Activated T-helper 2 cell treated with anti-CD3 and anti-CD28 coated beads, Interferon-gamma antibody, Interleukin-2, Interleukin-4, amounts not matched to agents 10 μg/mL and 5 μg/mL and 100 μg/mL, durations not matched to agents 14 hours and 24 hours and 36 hours (primary cell): ENCODE measurements at regions of chr16 and their contacts with region 1.

Region 1: DNA sequence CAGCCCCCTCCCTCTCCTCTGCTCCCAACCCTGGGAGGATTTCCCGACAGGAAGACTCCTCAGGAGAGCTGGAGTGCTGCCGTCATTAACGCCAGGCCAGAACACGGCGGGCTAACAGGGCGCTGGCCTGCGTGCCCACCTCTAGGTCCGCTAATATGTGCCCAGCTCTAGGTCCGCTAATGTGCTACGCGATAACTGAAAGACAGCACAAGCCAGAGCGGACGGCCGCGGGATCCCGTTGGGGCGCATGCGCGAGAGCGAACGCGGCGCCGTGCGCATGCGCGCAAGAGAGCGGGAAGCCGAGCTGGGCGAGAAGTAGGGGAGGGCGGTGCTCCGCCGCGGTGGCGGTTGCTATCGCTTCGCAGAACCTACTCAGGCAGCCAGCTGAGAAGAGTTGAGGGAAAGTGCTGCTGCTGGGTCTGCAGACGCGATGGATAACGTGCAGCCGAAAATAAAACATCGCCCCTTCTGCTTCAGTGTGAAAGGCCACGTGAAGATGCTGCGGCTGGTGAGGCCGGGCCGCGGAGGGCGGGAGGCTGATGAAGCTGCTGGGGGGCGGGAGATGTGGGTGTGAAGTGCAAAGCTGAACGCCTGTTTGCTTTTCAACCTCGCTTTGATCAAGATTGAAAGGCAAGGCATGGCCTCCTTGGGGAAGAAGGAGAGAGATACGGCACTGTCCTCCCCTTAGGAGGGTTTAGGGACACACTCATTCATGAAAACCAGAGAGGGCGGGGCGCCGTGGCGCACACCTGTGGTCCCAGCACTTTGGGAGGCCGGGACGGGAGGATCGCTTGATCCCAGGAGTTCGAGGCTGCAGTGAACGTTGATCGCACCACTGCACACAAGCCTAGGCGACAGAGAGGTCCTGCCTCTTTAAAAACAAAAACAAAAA is at the start of gene CKLF:
- DNase-seq: peak; percentile 94
- H3K4me3 Mint-ChIP-seq: peak within 1 kb of the TSS; percentile 98
- H3K27ac Mint-ChIP-seq: peak within 1 kb of the TSS; percentile 93
- H3K4me1 Mint-ChIP-seq: peaks cover 64% of the 10 kb centered on the region
- H3K27me3 Mint-ChIP-seq: no peaks in the 10 kb centered on the region
- total RNA-seq, gene CKLF: 102 and 110 TPM in 2 replicates

Region 2: DNA sequence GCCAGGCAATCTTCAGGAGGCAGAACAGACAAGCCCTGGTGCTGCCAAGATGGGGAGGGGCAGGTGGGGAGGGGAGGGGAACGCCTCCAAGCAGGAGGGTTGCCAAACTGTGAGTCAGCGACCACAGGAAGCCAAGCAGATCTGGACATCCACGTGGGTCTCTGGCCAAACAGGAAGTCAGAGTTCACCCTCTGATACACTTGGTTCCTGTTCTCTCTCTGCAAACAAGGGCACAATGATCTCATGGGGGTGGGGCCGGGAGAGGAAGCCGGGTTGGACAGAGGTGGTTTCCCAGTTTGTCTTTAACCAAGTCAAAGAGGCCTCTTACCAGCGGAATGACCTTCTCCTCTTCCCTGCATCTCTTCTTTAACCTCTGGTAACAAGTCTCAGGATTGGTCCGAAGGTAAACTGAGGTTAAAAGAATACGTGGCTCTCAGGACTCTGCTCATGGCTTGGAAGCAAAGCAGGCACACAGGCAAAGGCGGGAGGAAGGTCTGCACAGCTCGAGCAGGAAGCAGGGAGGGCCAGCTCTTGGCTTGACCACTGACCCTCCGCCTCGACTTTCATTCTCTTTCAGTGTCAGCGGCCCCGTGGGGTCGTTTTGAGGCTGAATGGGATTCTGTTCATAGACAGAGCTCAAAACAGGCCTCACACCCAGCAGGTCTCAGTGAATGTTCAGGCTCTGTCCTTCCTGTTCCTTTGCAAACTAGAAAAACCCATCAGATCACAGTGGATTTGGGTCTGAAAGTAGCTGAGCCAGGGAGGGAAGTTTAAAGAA is 35.5 kb before region 1 on chr16:
- intact Hi-C with region 1: loop called (anchors 1 kb)
- DNase-seq: peak; percentile 75
- H3K4me3 Mint-ChIP-seq: peak overlapping the region; percentile 82
- H3K27ac Mint-ChIP-seq: peak overlapping the region; percentile 99
- H3K4me1 Mint-ChIP-seq: peaks cover 59% of the 10 kb centered on the region
- H3K27me3 Mint-ChIP-seq: no peaks in the 10 kb centered on the region

Region 3: GRCh38 chr16:66521951-66522771 is 30.4 kb before region 1 on chr16:
- intact Hi-C with region 1: loop called (anchors 1 kb)
- DNase-seq: peak; percentile 83
- H3K4me3 Mint-ChIP-seq: peak overlapping the region; percentile 49
- H3K27ac Mint-ChIP-seq: peak overlapping the region; percentile 85
- H3K4me1 Mint-ChIP-seq: peaks cover 74% of the 10 kb centered on the region
- H3K27me3 Mint-ChIP-seq: no peaks in the 10 kb centered on the region

Region 4: GRCh38 chr16:66585481-66586239 is 33.1 kb after region 1 on chr16:
- intact Hi-C with region 1: no loop called
- DNase-seq: no peak
- H3K4me3 Mint-ChIP-seq: no peak overlapping the region
- H3K27ac Mint-ChIP-seq: no peak overlapping the region
- H3K4me1 Mint-ChIP-seq: peaks cover 29% of the 10 kb centered on the region
- H3K27me3 Mint-ChIP-seq: no peaks in the 10 kb centered on the region

Region 5: GRCh38 chr16:66596986-66597848 is 44.7 kb after region 1 on chr16:
- intact Hi-C with region 1: loop called (anchors 2 kb)
- DNase-seq: no peak
- H3K4me3 Mint-ChIP-seq: peak overlapping the region; percentile 55
- H3K27ac Mint-ChIP-seq: peak overlapping the region; percentile 96
- H3K4me1 Mint-ChIP-seq: peaks cover 36% of the 10 kb centered on the region
- H3K27me3 Mint-ChIP-seq: no peaks in the 10 kb centered on the region

Region 6: GRCh38 chr16:66608241-66609138 is 56.0 kb after region 1 on chr16:
- intact Hi-C with region 1: loop called (anchors 1 kb)
- DNase-seq: peak; percentile 72
- H3K4me3 Mint-ChIP-seq: peak overlapping the region; percentile 57
- H3K27ac Mint-ChIP-seq: peak overlapping the region; percentile 68
- H3K4me1 Mint-ChIP-seq: peaks cover 27% of the 10 kb centered on the region
- H3K27me3 Mint-ChIP-seq: no peaks in the 10 kb centered on the region